ENCODE measurements at regions of chr2 and their contacts with region 1.

Region 1: GRCh38 chr2:190765386-190766173 is 115.0 kb upstream of the GLS start:
- DNase-seq: peak in 1 of 4 experiments; percentile 36
- ATAC-seq: peak; percentile 25; the same call in 2 of the 3 replicates
- H3K4me3 ChIP-seq: no peak overlapping the region
- H3K27ac ChIP-seq: no peak overlapping the region
- H3K4me1 ChIP-seq: peaks cover 0 to 17% of the 10 kb centered on the region in 2 experiments; a peak in 2 of 5 replicates
- H3K27me3 ChIP-seq: no peaks in the 10 kb centered on the region
- CTCF ChIP-seq: no peak
- EP300 ChIP-seq: no peak
- POLR2A ChIP-seq: no peak
- RAD21 ChIP-seq: no peak

Region 2: GRCh38 chr2:190701586-190701985 is 64.0 kb before region 1 on chr2:
- CTCF ChIA-PET with region 1: no interaction called
- POLR2A ChIA-PET with region 1: no interaction called
- in situ Hi-C with region 1: no loop called
- intact Hi-C with region 1: loop called (anchors 5 kb)
- DNase-seq: no peak
- ATAC-seq: 0 out of 3 replicates have a peak, but pooled peaks have one; percentile 43
- H3K4me3 ChIP-seq: no peak overlapping the region
- H3K27ac ChIP-seq: no peak overlapping the region
- H3K4me1 ChIP-seq: no peaks in the 10 kb centered on the region; a peak in 1 of 5 replicates
- H3K27me3 ChIP-seq: no peaks in the 10 kb centered on the region
- CTCF ChIP-seq: no peak
- EP300 ChIP-seq: no peak
- POLR2A ChIP-seq: no peak
- RAD21 ChIP-seq: no peak

Region 3: DNA sequence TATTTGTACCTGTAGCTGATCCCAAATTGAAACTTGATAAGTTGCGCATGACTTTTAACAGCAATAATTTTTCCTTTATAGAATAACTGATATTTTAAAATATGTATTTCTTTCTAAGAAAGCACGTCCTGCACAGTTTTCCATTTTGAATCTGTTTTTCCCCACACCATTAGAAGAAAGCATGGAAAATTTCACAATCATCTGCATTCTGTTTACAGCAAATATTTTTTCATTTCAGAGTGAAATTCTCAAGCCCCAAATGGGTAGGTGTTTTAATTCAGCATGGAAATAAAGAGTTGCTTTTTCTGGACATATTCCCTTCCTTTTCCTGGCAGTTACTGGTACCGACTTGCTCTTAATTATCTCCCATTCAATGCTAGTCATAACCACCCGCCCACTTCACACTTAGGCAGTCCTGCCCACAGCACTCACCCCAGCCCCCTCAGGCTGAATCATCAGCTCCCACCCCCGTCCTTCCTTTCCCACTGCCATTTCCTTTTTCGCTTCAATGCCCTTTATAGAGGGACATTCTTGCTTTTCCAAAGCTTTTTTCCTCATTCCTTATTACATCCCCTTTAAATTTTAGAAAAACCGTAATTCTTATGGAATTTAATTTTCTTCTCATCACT is 25.9 kb after region 1 on chr2:
- CTCF ChIA-PET with region 1: no interaction called
- POLR2A ChIA-PET with region 1: no interaction called
- in situ Hi-C with region 1: no loop called
- intact Hi-C with region 1: no loop called
- DNase-seq: peak in 3 of 4 experiments; percentile 10 to 52 (median 39)
- ATAC-seq: peak; percentile 45; the same call in 1 of the 3 replicates
- H3K4me3 ChIP-seq: no peak overlapping the region
- H3K27ac ChIP-seq: no peak overlapping the region
- H3K4me1 ChIP-seq: peaks cover 0 to 7% of the 10 kb centered on the region in 2 experiments; a peak in 1 of 5 replicates
- H3K27me3 ChIP-seq: no peaks in the 10 kb centered on the region
- CTCF ChIP-seq: no peak
- EP300 ChIP-seq: no peak; the same call in 1 of the 2 replicates
- POLR2A ChIP-seq: no peak
- RAD21 ChIP-seq: no peak

Measured in K562 (cell line).